ENCODE measurements at regions of chr17 and their contacts with region 1.

Region 1: GRCh38 chr17:75319904-75320691 is 30.9 kb upstream of the SLC25A19 start:
- DNase-seq: no peak
- ATAC-seq: peak; percentile 67
- H3K4me3 ChIP-seq: peak overlapping the region; percentile 59; the same call in 1 of the 2 replicates
- H3K27ac ChIP-seq: peak overlapping the region; percentile 85
- H3K4me1 ChIP-seq: peaks cover 76% of the 10 kb centered on the region
- H3K27me3 ChIP-seq: no peaks in the 10 kb centered on the region
- CTCF ChIP-seq: no peak
- EP300 ChIP-seq: peak; percentile 63 to 75; a peak in 3 of 4 replicates
- POLR2A ChIP-seq: no peak; the same call in 1 of the 2 replicates
- RAD21 ChIP-seq: no peak; the same call in 1 of the 2 replicates

Region 2: GRCh38 chr17:74822939-74823367 is 497.1 kb before region 1 on chr17:
- CTCF ChIA-PET with region 1: no interaction called
- POLR2A ChIA-PET with region 1: no interaction called
- RAD21 ChIA-PET with region 1: no interaction called
- SMC1A ChIA-PET with region 1: no interaction called
- in situ Hi-C with region 1: no loop called
- intact Hi-C with region 1: no loop called
- DNase-seq: no peak
- ATAC-seq: no peak
- H3K4me3 ChIP-seq: no peak overlapping the region
- H3K27ac ChIP-seq: no peak overlapping the region
- H3K4me1 ChIP-seq: no peaks in the 10 kb centered on the region
- H3K27me3 ChIP-seq: no peaks in the 10 kb centered on the region
- CTCF ChIP-seq: no peak
- EP300 ChIP-seq: no peak
- POLR2A ChIP-seq: no peak
- RAD21 ChIP-seq: no peak

Region 3: DNA sequence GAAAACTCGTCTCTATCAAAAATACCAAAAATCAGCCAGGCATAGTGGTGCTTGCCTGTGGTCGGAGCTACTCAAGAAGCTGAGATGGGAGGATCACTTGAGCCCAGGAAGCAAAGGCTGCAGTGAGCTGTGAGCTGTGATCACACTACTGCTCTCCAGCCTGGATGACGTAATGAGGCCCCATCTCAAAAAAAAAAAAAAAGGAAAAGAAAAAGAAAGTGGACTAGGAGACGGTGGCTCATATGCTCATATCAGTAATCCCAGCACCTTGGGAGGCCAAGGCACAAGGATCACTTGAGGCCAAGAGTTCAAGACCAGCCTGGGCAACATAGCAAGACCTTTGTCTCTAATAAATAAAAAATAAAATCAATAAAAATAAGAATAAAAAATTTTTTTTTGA is 128.5 kb before region 1 on chr17:
- CTCF ChIA-PET with region 1: no interaction called
- POLR2A ChIA-PET with region 1: no interaction called
- RAD21 ChIA-PET with region 1: no interaction called
- SMC1A ChIA-PET with region 1: no interaction called
- in situ Hi-C with region 1: no loop called
- intact Hi-C with region 1: no loop called
- DNase-seq: no peak
- ATAC-seq: no peak
- H3K4me3 ChIP-seq: no peak overlapping the region
- H3K27ac ChIP-seq: no peak overlapping the region
- H3K4me1 ChIP-seq: peaks cover 6% of the 10 kb centered on the region; the same call in 1 of the 2 replicates
- H3K27me3 ChIP-seq: no peaks in the 10 kb centered on the region
- CTCF ChIP-seq: no peak
- EP300 ChIP-seq: no peak
- POLR2A ChIP-seq: no peak
- RAD21 ChIP-seq: no peak

Region 4: GRCh38 chr17:75218131-75218530 is 102.0 kb before region 1 on chr17:
- CTCF ChIA-PET with region 1: no interaction called
- POLR2A ChIA-PET with region 1: no interaction called
- RAD21 ChIA-PET with region 1: no interaction called
- SMC1A ChIA-PET with region 1: no interaction called
- in situ Hi-C with region 1: no loop called
- intact Hi-C with region 1: no loop called
- DNase-seq: no peak
- ATAC-seq: no peak
- H3K4me3 ChIP-seq: no peak overlapping the region
- H3K27ac ChIP-seq: no peak overlapping the region
- H3K4me1 ChIP-seq: no peaks in the 10 kb centered on the region
- H3K27me3 ChIP-seq: no peaks in the 10 kb centered on the region
- CTCF ChIP-seq: no peak
- EP300 ChIP-seq: no peak
- POLR2A ChIP-seq: no peak
- RAD21 ChIP-seq: no peak

Region 5: GRCh38 chr17:75289115-75289831 is 30.8 kb before region 1 on chr17 and contains the start of gene SLC25A19:
- CTCF ChIA-PET with region 1: interaction called, 36 read pairs
- POLR2A ChIA-PET with region 1: interaction called, 13 read pairs
- RAD21 ChIA-PET with region 1: interaction called, 364 read pairs
- SMC1A ChIA-PET with region 1: interaction called, 243 read pairs
- in situ Hi-C with region 1: no loop called
- intact Hi-C with region 1: loop called (anchors 5 kb)
- DNase-seq: peak; percentile 98
- ATAC-seq: peak; percentile 95
- H3K4me3 ChIP-seq: peak within 1 kb of the TSS; percentile 91
- H3K27ac ChIP-seq: peak within 1 kb of the TSS; percentile 83
- H3K4me1 ChIP-seq: peaks cover 34% of the 10 kb centered on the region
- H3K27me3 ChIP-seq: no peaks in the 10 kb centered on the region
- CTCF ChIP-seq: peak; percentile 30 to 60 (median 37); a peak in 4 of 6 replicates
- EP300 ChIP-seq: no peak
- POLR2A ChIP-seq: peak; percentile 97
- RAD21 ChIP-seq: peak; percentile 51
- polyA plus RNA-seq, gene SLC25A19: 32.9 to 43.1 TPM

Region 6: GRCh38 chr17:75338335-75338734 is 18.2 kb after region 1 on chr17:
- CTCF ChIA-PET with region 1: interaction called, 182 read pairs
- POLR2A ChIA-PET with region 1: interaction called, 11 read pairs
- RAD21 ChIA-PET with region 1: interaction called, 17 read pairs
- SMC1A ChIA-PET with region 1: interaction called, 54 read pairs
- in situ Hi-C with region 1: no loop called
- intact Hi-C with region 1: no loop called
- DNase-seq: no peak
- ATAC-seq: peak; percentile 28
- H3K4me3 ChIP-seq: peak overlapping the region; percentile 40; the same call in 1 of the 2 replicates
- H3K27ac ChIP-seq: peak overlapping the region; percentile 36
- H3K4me1 ChIP-seq: peaks cover 44% of the 10 kb centered on the region
- H3K27me3 ChIP-seq: no peaks in the 10 kb centered on the region
- CTCF ChIP-seq: no peak
- EP300 ChIP-seq: no peak
- POLR2A ChIP-seq: no peak
- RAD21 ChIP-seq: no peak

Region 7: DNA sequence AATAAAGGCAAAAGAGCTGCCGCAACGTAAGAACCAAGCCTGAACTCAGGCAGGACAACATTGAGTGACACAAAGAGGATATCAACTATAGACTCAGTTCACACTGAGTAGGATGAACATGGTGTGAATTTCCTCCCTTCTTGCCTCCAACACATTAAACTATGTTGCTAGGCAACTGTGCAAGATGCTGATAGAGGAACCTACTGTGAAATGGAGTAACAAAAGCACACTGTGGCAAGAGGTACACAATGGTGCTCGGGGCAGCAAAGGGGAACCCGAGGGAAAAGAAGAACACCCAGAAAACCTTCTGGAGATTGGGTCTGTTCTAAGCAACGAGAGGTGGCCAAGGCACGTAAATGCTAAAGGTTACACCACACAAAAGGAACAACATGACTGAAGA is 51.2 kb after region 1 on chr17:
- CTCF ChIA-PET with region 1: interaction called, 9 read pairs
- POLR2A ChIA-PET with region 1: no interaction called
- RAD21 ChIA-PET with region 1: interaction called, 3 read pairs
- SMC1A ChIA-PET with region 1: interaction called, 27 read pairs
- in situ Hi-C with region 1: no loop called
- intact Hi-C with region 1: no loop called
- DNase-seq: no peak
- ATAC-seq: peak; percentile 51
- H3K4me3 ChIP-seq: no peak overlapping the region
- H3K27ac ChIP-seq: peak overlapping the region; percentile 27; the same call in 1 of the 2 replicates
- H3K4me1 ChIP-seq: peaks cover 24% of the 10 kb centered on the region
- H3K27me3 ChIP-seq: no peaks in the 10 kb centered on the region
- CTCF ChIP-seq: no peak
- EP300 ChIP-seq: no peak
- POLR2A ChIP-seq: no peak
- RAD21 ChIP-seq: no peak

Region 8: GRCh38 chr17:75400326-75400939 is 80.3 kb after region 1 on chr17:
- CTCF ChIA-PET with region 1: interaction called, 69 read pairs
- POLR2A ChIA-PET with region 1: interaction called, 11 read pairs
- RAD21 ChIA-PET with region 1: interaction called, 46 read pairs
- SMC1A ChIA-PET with region 1: interaction called, 115 read pairs
- in situ Hi-C with region 1: no loop called
- intact Hi-C with region 1: loop called (anchors 1 kb)
- DNase-seq: no peak
- ATAC-seq: no peak
- H3K4me3 ChIP-seq: peak overlapping the region; percentile 52
- H3K27ac ChIP-seq: no peak overlapping the region
- H3K4me1 ChIP-seq: peaks cover 24% of the 10 kb centered on the region; the same call in 1 of the 2 replicates
- H3K27me3 ChIP-seq: no peaks in the 10 kb centered on the region
- CTCF ChIP-seq: no peak
- EP300 ChIP-seq: no peak
- POLR2A ChIP-seq: no peak
- RAD21 ChIP-seq: no peak